Naive thymus-derived CD4-positive, alpha-beta T cell (primary cell): ENCODE measurements at regions of chr17 and their contacts with region 1.

Region 1: DNA sequence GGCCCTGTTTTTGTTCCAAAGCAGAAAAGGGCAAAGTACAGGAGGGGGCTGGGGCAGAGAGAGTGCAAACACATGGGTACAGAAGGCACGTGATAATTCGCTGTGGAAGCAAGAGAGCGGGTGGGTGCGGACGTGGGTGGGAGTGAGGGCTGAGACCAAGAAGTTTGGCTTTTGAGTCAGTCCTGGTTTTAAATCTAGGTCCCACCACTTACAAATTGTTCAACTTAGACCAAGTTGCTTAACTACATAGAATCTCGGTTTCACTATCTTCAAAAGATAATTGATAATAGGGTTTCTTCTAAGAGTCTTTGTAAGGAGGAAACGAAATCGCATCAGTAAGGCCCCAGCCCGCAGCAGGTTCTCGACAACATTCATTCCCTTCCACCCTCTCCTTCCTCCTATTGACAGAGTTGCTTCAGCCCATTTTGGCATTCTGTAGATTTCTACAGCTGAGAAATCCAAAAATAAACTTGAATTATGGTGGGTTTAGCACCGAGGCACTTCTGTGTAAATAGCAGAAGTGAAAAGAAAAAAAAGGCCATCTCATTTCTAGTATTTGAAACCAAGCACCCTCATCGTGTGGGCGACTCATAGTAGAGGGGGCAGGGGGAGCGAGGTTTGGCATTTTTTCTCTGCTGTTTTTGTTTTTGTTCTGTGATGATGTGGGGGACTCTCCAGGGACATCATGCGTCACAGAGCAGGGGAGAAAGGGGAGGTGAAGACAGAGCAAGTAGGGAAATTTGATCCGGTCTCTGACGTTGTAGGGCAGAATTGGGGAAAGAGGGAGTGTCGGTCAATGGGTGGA is 33.6 kb upstream of the CCR7 start:
- DNase-seq: peak in 8 of 9 donors; percentile 67 to 93 (median 80)
- ATAC-seq: peak; percentile 80
- H3K4me3 ChIP-seq: peak overlapping the region; percentile 25
- H3K4me3 Mint-ChIP-seq: peak overlapping the region; percentile 53 to 88 (median 76)
- H3K27ac ChIP-seq: peak overlapping the region; percentile 94
- H3K27ac Mint-ChIP-seq: peak overlapping the region; percentile 95 to 100 (median 99)
- H3K4me1 ChIP-seq: peaks cover 62 to 98% of the 10 kb centered on the region in 2 donors
- H3K4me1 Mint-ChIP-seq: peaks cover 64 to 100% (median 96%) of the 10 kb centered on the region in 7 donors
- H3K27me3 ChIP-seq: no peaks in the 10 kb centered on the region
- H3K27me3 Mint-ChIP-seq: no peaks in the 10 kb centered on the region

Region 2: GRCh38 chr17:40551879-40552768 is 46.7 kb before region 1 on chr17:
- CTCF ChIA-PET with region 1: interaction called, 4 read pairs
- POLR2A ChIA-PET with region 1: interaction called, 2,132 read pairs
- intact Hi-C with region 1: no loop called
- DNase-seq: peak in 2 of 9 donors; percentile 33 to 43
- ATAC-seq: peak; percentile 2
- H3K4me3 ChIP-seq: no peak overlapping the region
- H3K4me3 Mint-ChIP-seq: peak overlapping the region in 9 of 10 donors; percentile 4 to 100 (median 58)
- H3K27ac ChIP-seq: peak overlapping the region; percentile 79
- H3K27ac Mint-ChIP-seq: peak overlapping the region; percentile 76 to 100 (median 99)
- H3K4me1 ChIP-seq: peaks cover 52 to 93% of the 10 kb centered on the region in 2 donors
- H3K4me1 Mint-ChIP-seq: peaks cover 59 to 100% (median 98%) of the 10 kb centered on the region in 7 donors
- H3K27me3 ChIP-seq: no peaks in the 10 kb centered on the region
- H3K27me3 Mint-ChIP-seq: no peaks in the 10 kb centered on the region

Region 3: DNA sequence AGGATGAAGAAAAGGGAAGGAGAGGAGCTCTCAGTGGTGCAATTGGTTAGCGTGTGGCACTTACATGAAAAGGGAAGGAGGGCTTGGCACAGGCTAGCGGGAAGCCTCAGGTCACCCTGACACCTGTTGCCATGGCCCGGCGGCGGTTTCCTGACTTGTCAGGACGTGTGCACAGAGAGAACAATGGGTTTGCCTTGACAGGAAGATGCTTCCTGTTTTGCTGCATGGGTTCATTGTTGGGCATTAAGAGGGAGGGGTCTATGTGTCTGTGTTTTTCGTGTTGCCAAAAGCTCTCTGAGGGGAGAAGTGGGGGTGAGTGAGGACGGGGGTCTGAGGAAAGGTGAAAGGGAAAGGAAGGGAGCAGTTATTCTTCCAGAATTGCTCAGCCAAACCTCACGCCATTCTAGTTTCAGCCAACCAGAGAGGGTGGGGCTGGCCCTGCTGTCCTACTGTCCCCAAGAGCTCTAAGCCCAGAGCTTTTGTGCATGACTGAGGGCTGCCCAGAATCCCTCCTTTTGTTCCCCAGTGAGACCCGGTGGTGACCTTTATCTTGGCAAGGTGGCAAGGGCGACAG is 16.4 kb before region 1 on chr17:
- CTCF ChIA-PET with region 1: interaction called, 20 read pairs
- POLR2A ChIA-PET with region 1: interaction called, 598 read pairs
- intact Hi-C with region 1: loop called (anchors 1 kb)
- DNase-seq: peak in 7 of 9 donors; percentile 75 to 90 (median 86)
- ATAC-seq: peak; percentile 91
- H3K4me3 ChIP-seq: peak overlapping the region; percentile 46
- H3K4me3 Mint-ChIP-seq: peak overlapping the region; percentile 73 to 88 (median 77)
- H3K27ac ChIP-seq: peak overlapping the region; percentile 84
- H3K27ac Mint-ChIP-seq: peak overlapping the region; percentile 91 to 99 (median 96)
- H3K4me1 ChIP-seq: peaks cover 27 to 76% of the 10 kb centered on the region in 2 donors
- H3K4me1 Mint-ChIP-seq: peaks cover 63 to 100% (median 97%) of the 10 kb centered on the region in 7 donors
- H3K27me3 ChIP-seq: no peaks in the 10 kb centered on the region
- H3K27me3 Mint-ChIP-seq: no peaks in the 10 kb centered on the region

Region 4: DNA sequence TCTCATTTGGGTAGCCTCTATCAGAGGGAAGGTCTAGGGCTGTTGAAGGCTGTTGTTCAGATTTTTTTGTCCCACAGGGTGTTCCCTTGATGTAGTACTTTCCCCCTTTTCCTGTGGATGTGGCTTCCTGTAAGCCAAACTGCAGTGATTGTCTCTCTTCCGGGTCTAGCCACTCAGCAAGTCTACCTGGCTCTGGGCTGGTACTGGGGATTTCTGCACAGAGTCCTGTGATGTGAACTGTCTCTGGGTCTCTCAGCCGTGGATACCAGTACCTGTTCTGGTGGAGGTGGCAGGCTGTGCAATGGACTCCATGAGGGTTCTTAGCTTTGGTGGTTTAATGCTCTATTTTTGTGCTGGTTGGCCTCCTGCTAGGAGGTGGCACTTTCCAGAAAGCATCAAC is 10.3 kb before region 1 on chr17:
- CTCF ChIA-PET with region 1: interaction called, 7 read pairs
- POLR2A ChIA-PET with region 1: interaction called, 171 read pairs
- intact Hi-C with region 1: loop called in 1 of 2 experiments (anchors 1 kb)
- DNase-seq: peak in 1 of 9 donors; percentile 45
- ATAC-seq: no peak
- H3K4me3 ChIP-seq: peak overlapping the region; percentile 14
- H3K4me3 Mint-ChIP-seq: peak overlapping the region; percentile 33 to 90 (median 76)
- H3K27ac ChIP-seq: peak overlapping the region; percentile 47
- H3K27ac Mint-ChIP-seq: peak overlapping the region; percentile 21 to 99 (median 96)
- H3K4me1 ChIP-seq: peaks cover 3 to 61% of the 10 kb centered on the region in 2 donors
- H3K4me1 Mint-ChIP-seq: peaks cover 53 to 94% (median 85%) of the 10 kb centered on the region in 7 donors
- H3K27me3 ChIP-seq: no peaks in the 10 kb centered on the region
- H3K27me3 Mint-ChIP-seq: no peaks in the 10 kb centered on the region